Common myeloid progenitor, CD34-positive (primary cell): ENCODE measurements at regions of chr19 and their contacts with region 1.

Region 1: DNA sequence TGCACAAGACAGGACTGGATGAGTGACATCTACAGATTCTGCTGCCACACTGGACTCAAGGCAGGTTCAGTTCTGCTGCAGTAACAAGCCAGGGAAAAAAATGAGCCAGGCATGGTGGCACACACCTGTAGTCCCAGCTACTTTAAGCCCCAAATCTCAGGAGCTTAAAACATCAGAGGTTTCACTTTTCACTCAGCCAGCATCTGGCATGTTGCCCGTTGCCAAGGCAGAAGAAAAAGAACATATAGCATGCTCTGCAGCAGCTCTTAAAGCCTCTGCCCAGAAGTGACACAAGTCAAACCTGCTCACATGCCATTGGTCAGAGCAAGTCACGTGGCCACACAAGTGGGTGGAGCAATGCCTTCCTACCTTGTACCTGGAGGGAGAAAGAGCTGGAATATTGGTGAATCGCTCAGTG is 14.7 kb upstream of the ADGRE5 start:
- DNase-seq: peak; percentile 93 to 97 (median 97)
- H3K4me3 ChIP-seq: peak overlapping the region in 2 of 7 experiments; percentile 33 to 60
- H3K27ac ChIP-seq: peak overlapping the region in 1 of 2 experiments; percentile 40
- H3K4me1 ChIP-seq: peaks cover 39 to 79% (median 70%) of the 10 kb centered on the region in 4 experiments
- H3K27me3 ChIP-seq: no peaks in the 10 kb centered on the region

Region 2: GRCh38 chr19:13794757-13795589 is 571.5 kb before region 1 on chr19 and contains the start of gene ZSWIM4:
- CTCF ChIA-PET with region 1: no interaction called
- POLR2A ChIA-PET with region 1: no interaction called
- DNase-seq: peak; percentile 98 to 99 (median 99)
- H3K4me3 ChIP-seq: peak within 1 kb of the TSS; percentile 70 to 94 (median 81)
- H3K27ac ChIP-seq: peak within 1 kb of the TSS; percentile 50 to 86
- H3K4me1 ChIP-seq: peaks cover 10 to 40% (median 26%) of the 10 kb centered on the region in 4 experiments
- H3K27me3 ChIP-seq: no peaks in the 10 kb centered on the region

Region 3: DNA sequence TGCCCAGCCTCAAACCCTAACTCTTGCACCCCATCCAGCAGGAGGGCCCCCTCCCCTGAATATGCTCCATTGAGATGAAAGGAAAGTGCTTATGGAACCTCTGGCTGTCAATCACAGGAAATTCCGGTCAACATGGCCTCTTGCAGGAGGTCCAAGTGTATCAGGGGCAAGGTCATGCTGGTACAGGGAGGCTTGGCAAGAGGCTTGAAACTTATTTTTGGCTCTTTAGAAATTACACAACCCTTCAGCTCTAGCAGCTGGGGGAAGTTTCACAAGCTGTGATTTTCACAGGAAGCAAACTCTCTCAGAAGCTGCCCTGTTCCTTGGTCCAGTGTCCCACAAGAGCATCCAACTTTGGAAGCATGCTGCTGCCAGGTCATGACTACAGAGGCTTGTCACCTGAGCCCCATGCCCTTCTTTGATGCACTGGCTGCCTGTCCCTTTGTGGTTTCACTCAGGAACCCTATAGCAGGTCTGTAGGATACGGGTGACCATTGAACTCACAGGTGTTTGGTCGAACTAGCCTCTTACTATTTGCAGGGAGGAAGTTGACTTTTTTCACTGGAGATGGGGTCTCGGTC is 238.5 kb before region 1 on chr19:
- CTCF ChIA-PET with region 1: no interaction called
- POLR2A ChIA-PET with region 1: no interaction called
- DNase-seq: no peak
- H3K4me3 ChIP-seq: no peak overlapping the region
- H3K27ac ChIP-seq: no peak overlapping the region
- H3K4me1 ChIP-seq: no peaks in the 10 kb centered on the region
- H3K27me3 ChIP-seq: no peaks in the 10 kb centered on the region

Region 4: DNA sequence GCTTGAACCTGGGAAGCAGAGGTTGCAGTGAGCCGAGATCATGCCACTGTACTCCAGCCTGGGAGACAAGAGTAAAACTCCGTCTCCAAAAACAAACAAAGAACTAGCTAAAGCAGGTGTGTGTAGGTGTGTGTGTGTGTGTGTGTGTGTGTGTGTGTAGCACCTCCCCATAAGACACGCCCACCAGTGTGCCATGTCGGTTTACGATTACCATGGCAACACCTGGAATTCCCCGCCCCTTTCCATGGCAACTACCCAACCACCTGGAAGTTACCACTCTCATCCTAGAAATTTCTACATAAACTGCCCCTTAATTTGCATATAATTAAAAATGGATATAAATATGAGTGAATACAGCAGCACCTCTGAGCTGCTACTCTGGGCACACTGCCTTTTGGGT is 66.2 kb before region 1 on chr19:
- CTCF ChIA-PET with region 1: no interaction called
- POLR2A ChIA-PET with region 1: no interaction called
- DNase-seq: no peak
- H3K4me3 ChIP-seq: no peak overlapping the region
- H3K27ac ChIP-seq: no peak overlapping the region
- H3K4me1 ChIP-seq: no peaks in the 10 kb centered on the region
- H3K27me3 ChIP-seq: peaks cover 0 to 3% (median 0%) of the 10 kb centered on the region in 5 experiments

Region 5: DNA sequence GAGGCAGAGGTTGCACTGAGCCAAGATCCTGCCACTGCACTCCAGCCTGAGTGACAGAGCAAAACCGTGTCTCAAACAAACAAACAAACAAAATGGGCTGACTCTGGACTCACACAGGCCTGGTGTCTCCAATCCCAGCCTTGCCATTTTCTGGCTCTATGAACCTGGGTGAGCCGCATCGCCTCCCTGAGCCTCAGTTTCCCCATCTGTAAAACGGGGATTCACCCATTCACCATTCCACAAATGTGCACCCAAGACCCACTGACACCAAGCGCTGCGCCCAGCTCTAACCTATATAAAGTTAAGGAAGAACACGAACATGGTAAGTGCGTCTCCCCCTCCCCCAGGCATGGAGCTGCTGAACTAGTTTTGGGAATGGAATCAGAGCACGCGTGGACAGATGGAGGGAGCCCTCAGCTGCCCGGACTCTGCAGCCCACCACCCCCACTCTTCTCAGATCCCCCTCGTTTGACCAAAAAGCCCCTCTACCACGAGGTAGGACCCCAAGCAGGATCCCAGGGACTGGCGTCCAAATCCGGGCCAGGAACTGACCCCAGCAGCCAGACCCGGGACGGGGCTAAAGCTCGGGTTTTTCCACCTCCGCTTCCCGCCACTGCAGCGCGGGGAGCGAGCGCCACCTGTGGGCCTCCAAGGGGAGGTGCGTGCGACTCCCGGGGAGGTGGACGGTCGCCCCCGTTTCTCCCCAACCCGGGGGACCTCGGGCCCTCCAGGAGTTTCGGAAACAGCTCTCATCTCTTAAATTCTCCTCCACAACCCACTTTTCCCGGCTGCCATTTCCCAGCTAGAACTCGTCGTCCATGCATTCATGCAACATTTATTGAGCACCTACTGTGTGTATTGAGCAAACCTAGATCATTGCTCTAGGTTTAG is 18.3 kb before region 1 on chr19:
- CTCF ChIA-PET with region 1: interaction called, 10 read pairs
- POLR2A ChIA-PET with region 1: no interaction called
- DNase-seq: peak; percentile 40 to 62 (median 55)
- H3K4me3 ChIP-seq: peak overlapping the region in 5 of 7 experiments; percentile 26 to 68 (median 48)
- H3K27ac ChIP-seq: no peak overlapping the region
- H3K4me1 ChIP-seq: peaks cover 0 to 8% (median 7%) of the 10 kb centered on the region in 4 experiments
- H3K27me3 ChIP-seq: peaks cover 0 to 2% (median 0%) of the 10 kb centered on the region in 5 experiments

Region 6: DNA sequence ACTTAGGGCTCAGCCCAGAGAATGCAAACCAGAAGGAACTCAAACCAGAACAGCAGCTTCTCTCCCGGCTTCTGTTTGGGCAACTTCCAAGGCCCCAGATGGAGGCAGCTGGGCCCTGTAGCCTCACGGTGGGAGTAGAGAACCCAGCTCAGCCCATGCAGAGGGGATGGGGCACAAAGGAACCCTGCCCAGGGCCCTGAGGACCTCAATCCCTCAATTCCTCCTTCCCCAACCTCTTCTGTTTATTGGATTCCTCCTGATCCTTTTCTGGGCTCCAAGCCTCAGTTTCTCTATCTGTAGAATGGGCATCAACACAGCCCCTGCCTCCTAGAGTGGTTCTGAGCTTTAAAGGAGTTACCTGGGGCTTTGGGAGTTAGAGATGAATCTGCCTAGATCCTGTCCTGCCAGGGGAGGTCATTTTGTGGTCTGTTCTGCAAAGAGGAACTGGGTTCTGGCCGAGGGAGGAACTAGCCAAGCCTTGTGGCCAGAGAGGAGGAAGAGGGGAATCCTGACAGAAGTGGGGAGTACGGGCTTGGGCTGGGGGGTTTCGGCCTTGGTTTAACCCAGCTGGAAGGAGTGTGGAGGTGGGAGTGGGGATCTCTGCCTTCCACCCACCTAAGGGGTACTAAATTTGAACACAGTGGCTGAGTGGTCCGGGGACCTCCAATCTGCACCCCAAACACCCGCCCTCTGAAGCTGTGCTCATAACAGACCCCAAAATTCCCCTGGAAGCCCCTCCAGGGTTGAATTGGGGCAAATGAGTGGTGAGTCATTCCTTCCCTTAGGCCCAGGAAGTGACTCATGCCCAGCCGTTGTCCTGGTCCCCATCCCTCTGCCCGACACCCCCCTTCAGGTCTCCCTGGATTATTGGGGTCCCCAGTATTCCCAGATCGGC is 17.4 kb after region 1 on chr19:
- CTCF ChIA-PET with region 1: interaction called, 54 read pairs
- POLR2A ChIA-PET with region 1: interaction called, 8 read pairs
- DNase-seq: peak; percentile 65 to 88 (median 82)
- H3K4me3 ChIP-seq: peak overlapping the region; percentile 18 to 95 (median 58)
- H3K27ac ChIP-seq: peak overlapping the region; percentile 88 to 97
- H3K4me1 ChIP-seq: peaks cover 0 to 64% (median 59%) of the 10 kb centered on the region in 4 experiments
- H3K27me3 ChIP-seq: no peaks in the 10 kb centered on the region

Region 7: DNA sequence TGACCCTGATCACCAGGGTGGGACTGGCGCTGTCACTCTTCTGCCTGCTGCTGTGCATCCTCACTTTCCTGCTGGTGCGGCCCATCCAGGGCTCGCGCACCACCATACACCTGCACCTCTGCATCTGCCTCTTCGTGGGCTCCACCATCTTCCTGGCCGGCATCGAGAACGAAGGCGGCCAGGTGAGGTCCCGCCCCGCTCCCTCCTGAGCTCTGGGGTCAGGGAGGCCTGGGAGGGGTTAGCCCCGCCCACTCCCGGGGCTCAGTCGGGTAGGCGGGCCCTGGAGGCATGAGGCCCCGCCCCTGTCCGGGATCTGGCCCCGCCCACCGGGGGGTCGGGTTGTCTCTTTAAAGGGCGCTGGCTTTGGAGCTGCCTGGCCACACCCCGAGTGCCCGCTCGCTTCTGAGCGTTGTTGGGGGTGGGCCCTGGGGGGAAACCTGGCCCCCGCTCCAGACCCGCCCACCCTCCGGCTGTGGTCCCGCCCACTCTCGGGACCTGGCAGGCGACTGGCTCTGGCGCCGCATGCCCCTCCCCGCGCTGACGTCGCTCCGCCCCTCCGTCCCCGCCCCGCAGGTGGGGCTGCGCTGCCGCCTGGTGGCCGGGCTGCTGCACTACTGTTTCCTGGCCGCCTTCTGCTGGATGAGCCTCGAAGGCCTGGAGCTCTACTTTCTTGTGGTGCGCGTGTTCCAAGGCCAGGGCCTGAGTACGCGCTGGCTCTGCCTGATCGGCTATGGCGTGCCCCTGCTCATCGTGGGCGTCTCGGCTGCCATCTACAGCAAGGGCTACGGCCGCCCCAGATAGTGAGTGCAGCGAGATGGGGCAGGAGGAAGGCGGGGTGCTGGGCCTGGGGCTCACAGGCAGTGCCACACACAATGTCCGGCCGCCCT is 39.5 kb after region 1 on chr19:
- CTCF ChIA-PET with region 1: interaction called, 19 read pairs
- POLR2A ChIA-PET with region 1: interaction called, 6 read pairs
- DNase-seq: peak; percentile 90 to 94 (median 94)
- H3K4me3 ChIP-seq: peak overlapping the region in 2 of 7 experiments; percentile 19 to 33
- H3K27ac ChIP-seq: peak overlapping the region in 1 of 2 experiments; percentile 34
- H3K4me1 ChIP-seq: peaks cover 0 to 7% (median 2%) of the 10 kb centered on the region in 4 experiments
- H3K27me3 ChIP-seq: no peaks in the 10 kb centered on the region

Region 8: DNA sequence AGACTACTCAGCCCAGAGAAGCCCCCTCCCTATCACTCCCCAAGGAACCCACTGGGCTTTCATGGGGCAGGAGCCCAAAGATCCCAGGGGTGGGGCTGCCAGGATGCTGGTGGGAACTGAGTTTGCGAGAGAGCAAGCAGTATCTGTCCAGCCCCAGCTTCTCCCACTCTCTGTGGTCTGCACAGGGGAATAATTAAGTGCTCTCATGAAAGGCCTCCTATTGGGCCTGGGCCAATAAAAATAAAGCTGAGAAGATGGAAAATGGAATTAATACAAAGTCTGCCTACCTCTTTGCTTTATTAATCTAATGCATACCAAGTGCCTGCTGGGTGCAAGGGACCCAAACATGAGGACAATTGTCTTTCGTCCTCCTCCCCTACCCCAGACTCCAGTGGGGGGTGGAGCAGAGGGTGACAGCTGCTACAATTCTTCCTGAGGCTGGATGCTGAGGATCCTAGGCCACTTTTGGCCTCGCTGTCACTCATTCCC is 47.2 kb after region 1 on chr19:
- CTCF ChIA-PET with region 1: interaction called, 19 read pairs
- POLR2A ChIA-PET with region 1: no interaction called
- DNase-seq: no peak
- H3K4me3 ChIP-seq: no peak overlapping the region
- H3K27ac ChIP-seq: no peak overlapping the region
- H3K4me1 ChIP-seq: peaks cover 0 to 27% (median 24%) of the 10 kb centered on the region in 4 experiments
- H3K27me3 ChIP-seq: no peaks in the 10 kb centered on the region

Region 9: DNA sequence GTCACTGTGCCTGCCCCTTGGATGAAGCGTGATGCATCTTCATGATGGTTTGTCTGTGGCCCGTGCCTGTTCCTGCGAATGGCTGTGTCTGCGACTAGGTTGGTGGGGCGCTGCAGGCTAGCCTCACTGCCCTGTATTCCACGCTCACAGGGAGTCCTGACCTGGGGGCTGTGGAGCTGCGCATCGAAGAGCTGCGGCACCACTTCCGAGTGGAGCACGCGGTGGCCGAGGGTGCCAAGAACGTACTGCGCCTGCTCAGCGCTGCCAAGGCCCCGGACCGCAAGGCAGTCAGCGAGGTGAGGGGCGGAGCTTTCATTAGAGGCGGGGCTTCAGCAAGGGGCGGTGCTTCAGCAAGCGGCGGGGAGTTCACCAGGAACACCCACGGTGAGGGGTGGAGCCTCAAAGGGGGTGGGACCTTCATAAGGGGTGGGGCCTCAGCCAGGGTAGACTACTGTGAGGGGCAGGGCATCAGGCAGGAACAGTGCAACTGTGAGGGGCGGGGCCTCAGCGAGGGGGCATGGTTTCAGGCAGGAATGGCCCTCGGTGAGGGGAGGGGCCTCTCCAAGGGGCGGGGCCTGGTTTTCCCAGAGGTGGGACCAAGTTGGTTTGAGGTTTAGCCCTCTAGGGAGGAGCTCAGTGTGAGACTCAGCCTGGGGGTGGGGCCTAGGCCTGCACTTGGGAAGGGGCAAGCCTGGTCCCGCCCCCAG is 83.8 kb after region 1 on chr19:
- CTCF ChIA-PET with region 1: no interaction called
- POLR2A ChIA-PET with region 1: no interaction called
- DNase-seq: peak; percentile 81 to 87 (median 87)
- H3K4me3 ChIP-seq: no peak overlapping the region
- H3K27ac ChIP-seq: no peak overlapping the region
- H3K4me1 ChIP-seq: no peaks in the 10 kb centered on the region
- H3K27me3 ChIP-seq: no peaks in the 10 kb centered on the region